K562 (cell line): ENCODE measurements at regions of chr9 and their contacts with region 1.

Region 1: GRCh38 chr9:97982683-97983588 is at the start of gene ANP32B:
- DNase-seq: peak; percentile 85 to 97 (median 89)
- ATAC-seq: peak; percentile 82
- H3K4me3 ChIP-seq: peak within 1 kb of the TSS; percentile 89
- H3K27ac ChIP-seq: peak within 1 kb of the TSS; percentile 99
- H3K4me1 ChIP-seq: peaks cover 33 to 52% of the 10 kb centered on the region in 2 experiments; a peak in 4 of 5 replicates
- H3K27me3 ChIP-seq: no peaks in the 10 kb centered on the region
- CTCF ChIP-seq: peak; percentile 69 to 96 (median 92)
- EP300 ChIP-seq: peak; percentile 66; the same call in 1 of the 2 replicates
- POLR2A ChIP-seq: peak; percentile 78
- RAD21 ChIP-seq: peak in 1 of 2 experiments; percentile 54; a peak in 3 of 4 replicates
- polyA plus RNA-seq, gene ANP32B: 87.2 to 141 TPM

Region 2: GRCh38 chr9:97943308-97943855 is 39.6 kb before region 1 on chr9:
- CTCF ChIA-PET with region 1: no interaction called
- POLR2A ChIA-PET with region 1: interaction called, 10 read pairs
- in situ Hi-C with region 1: no loop called
- intact Hi-C with region 1: loop called (anchors 2 kb)
- DNase-seq: peak; percentile 73 to 92 (median 81)
- ATAC-seq: peak; percentile 76
- H3K4me3 ChIP-seq: no peak overlapping the region
- H3K27ac ChIP-seq: peak overlapping the region; percentile 79
- H3K4me1 ChIP-seq: peaks cover 34 to 63% of the 10 kb centered on the region in 2 experiments; a peak in 4 of 5 replicates
- H3K27me3 ChIP-seq: no peaks in the 10 kb centered on the region
- CTCF ChIP-seq: no peak
- EP300 ChIP-seq: peak; percentile 99
- POLR2A ChIP-seq: no peak
- RAD21 ChIP-seq: no peak

Region 3: GRCh38 chr9:97961361-97961760 is 21.6 kb before region 1 on chr9:
- CTCF ChIA-PET with region 1: no interaction called
- POLR2A ChIA-PET with region 1: interaction called, 84 read pairs
- in situ Hi-C with region 1: no loop called
- intact Hi-C with region 1: loop called (anchors 2 kb)
- DNase-seq: no peak
- ATAC-seq: no peak
- H3K4me3 ChIP-seq: no peak overlapping the region
- H3K27ac ChIP-seq: peak overlapping the region; percentile 83
- H3K4me1 ChIP-seq: peaks cover 48 to 67% of the 10 kb centered on the region in 2 experiments
- H3K27me3 ChIP-seq: no peaks in the 10 kb centered on the region
- CTCF ChIP-seq: no peak
- EP300 ChIP-seq: no peak
- POLR2A ChIP-seq: no peak
- RAD21 ChIP-seq: no peak

Region 4: GRCh38 chr9:97997330-97998276 is 14.7 kb after region 1 on chr9:
- CTCF ChIA-PET with region 1: interaction called, 3 read pairs
- POLR2A ChIA-PET with region 1: interaction called, 29 read pairs
- in situ Hi-C with region 1: no loop called
- intact Hi-C with region 1: no loop called
- DNase-seq: no peak
- ATAC-seq: no peak; the same call in 2 of the 3 replicates
- H3K4me3 ChIP-seq: no peak overlapping the region
- H3K27ac ChIP-seq: peak overlapping the region; percentile 4; the same call in 1 of the 3 replicates
- H3K4me1 ChIP-seq: peaks cover 0 to 8% of the 10 kb centered on the region in 2 experiments; a peak in 3 of 5 replicates
- H3K27me3 ChIP-seq: no peaks in the 10 kb centered on the region
- CTCF ChIP-seq: no peak
- EP300 ChIP-seq: no peak
- POLR2A ChIP-seq: peak; percentile 54
- RAD21 ChIP-seq: no peak

Region 5: GRCh38 chr9:98255578-98256296 is 272.8 kb after region 1 on chr9 and contains the start of gene TBC1D2:
- CTCF ChIA-PET with region 1: no interaction called
- POLR2A ChIA-PET with region 1: interaction called, 3 read pairs
- in situ Hi-C with region 1: no loop called
- intact Hi-C with region 1: loop called (anchors 5 kb)
- DNase-seq: peak; percentile 95 to 97 (median 96)
- ATAC-seq: peak; percentile 92
- H3K4me3 ChIP-seq: peak within 1 kb of the TSS; percentile 73
- H3K27ac ChIP-seq: peak within 1 kb of the TSS; percentile 92
- H3K4me1 ChIP-seq: peaks cover 26 to 37% of the 10 kb centered on the region in 2 experiments; a peak in 4 of 5 replicates
- H3K27me3 ChIP-seq: no peaks in the 10 kb centered on the region
- CTCF ChIP-seq: peak in 2 of 3 experiments; percentile 22 to 39; a peak in 2 of 6 replicates
- EP300 ChIP-seq: no peak
- POLR2A ChIP-seq: peak; percentile 85
- RAD21 ChIP-seq: no peak
- polyA plus RNA-seq, gene TBC1D2: 0.10 to 0.21 TPM